ENCODE measurements at regions of chr2 and their contacts with region 1.

Region 1: GRCh38 chr2:11583840-11584524 is 50.1 kb downstream of the GREB1 start:
- DNase-seq: peak; percentile 83
- H3K4me3 ChIP-seq: no peak overlapping the region
- CTCF ChIP-seq: peak; percentile 91

Region 2: GRCh38 chr2:11124503-11125068 is 459.4 kb before region 1 on chr2:
- CTCF ChIA-PET with region 1: interaction called, 209 read pairs
- POLR2A ChIA-PET with region 1: no interaction called
- DNase-seq: no peak
- H3K4me3 ChIP-seq: no peak overlapping the region
- CTCF ChIP-seq: peak; percentile 97

Region 3: DNA sequence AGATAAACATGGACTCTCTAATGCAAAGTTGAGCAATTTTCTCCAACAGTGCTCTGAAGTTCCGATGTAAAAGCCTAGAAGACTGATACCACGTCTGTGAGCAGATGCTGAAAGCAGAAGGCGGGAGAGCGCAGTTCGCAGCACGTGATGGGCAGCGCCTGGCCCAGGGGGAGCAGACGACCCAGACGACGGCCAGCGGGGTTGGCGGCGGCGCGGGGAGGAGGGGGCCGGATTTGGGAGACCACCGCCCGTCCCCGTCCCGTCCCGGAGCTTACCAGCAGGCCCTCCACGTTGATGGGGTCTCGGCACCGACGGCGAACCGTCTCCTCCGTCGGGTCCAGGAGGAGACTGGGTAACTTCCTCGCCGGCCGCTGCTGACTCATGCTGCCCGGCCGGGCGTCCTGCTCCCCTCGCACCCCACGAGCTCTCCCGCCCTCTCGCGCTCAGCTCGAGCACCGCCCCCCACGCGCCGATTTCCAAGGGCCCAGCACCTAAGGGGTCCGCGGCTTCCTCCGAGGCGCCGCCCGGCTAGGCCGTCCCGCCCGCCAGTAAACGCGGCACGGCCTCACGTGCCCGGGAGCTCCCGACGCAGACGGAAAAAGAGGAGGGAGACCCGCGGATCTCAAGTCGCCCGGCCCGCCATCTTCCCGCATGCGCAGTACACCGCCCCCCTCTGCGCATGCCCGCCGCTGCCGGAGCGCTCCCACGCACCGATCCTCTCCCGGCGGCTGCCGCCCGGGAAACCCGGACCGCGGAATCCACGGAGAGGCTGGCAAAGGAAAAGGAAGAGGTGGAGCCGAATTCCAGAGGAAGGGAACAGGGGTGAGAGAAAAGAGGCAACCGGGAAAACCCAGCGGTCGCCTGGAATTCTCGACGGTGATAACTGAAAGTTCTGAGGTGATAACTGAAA is 118.2 kb before region 1 on chr2 and contains the start of gene E2F6:
- CTCF ChIA-PET with region 1: interaction called, 17 read pairs
- POLR2A ChIA-PET with region 1: no interaction called
- DNase-seq: peak; percentile 49
- H3K4me3 ChIP-seq: peak within 1 kb of the TSS; percentile 74
- CTCF ChIP-seq: no peak

Region 4: GRCh38 chr2:11527001-11527400 is 57.0 kb before region 1 on chr2:
- CTCF ChIA-PET with region 1: interaction called, 11 read pairs
- POLR2A ChIA-PET with region 1: no interaction called
- DNase-seq: no peak
- H3K4me3 ChIP-seq: no peak overlapping the region
- CTCF ChIP-seq: no peak

Region 5: DNA sequence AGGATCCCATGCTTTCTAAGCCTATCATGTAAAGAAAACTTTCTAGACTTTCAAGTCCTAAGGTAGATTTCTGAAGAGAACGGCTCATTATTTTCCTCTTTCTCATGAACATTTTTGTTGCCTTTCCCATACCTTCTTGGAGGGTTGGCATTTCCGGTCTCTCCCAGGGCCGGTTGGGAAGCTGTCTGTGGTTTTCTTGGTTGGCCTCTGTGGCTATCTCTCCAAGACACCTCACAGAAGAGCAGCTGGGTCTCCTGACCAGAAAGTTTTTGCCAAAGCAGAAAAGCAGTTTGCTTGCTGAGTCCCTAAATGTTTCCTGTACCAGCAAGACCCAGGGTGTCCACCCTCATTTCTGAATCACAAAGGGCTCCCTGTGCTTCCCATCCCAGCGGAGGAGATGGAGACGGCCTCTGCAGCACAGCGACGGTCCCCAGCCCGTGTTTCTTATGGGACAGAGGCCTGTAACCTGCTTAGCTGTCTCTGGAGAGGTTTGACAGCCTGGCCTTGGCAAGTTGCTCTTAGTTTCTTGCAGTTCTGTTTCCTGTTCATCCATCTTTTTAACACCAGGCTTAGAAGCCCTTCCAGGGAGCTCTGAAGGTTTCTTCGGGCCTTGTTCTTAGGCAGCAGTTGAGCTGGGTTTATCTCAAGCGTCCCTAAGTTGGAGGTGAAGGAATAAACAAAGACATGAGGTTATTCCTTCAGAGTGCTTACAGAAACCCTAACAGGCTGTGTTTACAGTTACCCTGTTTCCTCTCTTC is 10.4 kb before region 1 on chr2:
- CTCF ChIA-PET with region 1: interaction called, 134 read pairs
- POLR2A ChIA-PET with region 1: no interaction called
- DNase-seq: no peak
- H3K4me3 ChIP-seq: no peak overlapping the region
- CTCF ChIP-seq: no peak

Measured in AG04449 (cell line).